Activated B cell treated with CpG ODN at 0.5 μM for 24 hours (primary cell): ENCODE measurements at regions of chr2 and their contacts with region 1.

Region 1: GRCh38 chr2:208072250-208072892 is 47.0 kb upstream of the PLEKHM3 start:
- DNase-seq: no peak
- ATAC-seq: peak; percentile 71
- H3K4me3 Mint-ChIP-seq: no peak overlapping the region
- H3K27ac Mint-ChIP-seq: no peak overlapping the region
- H3K4me1 Mint-ChIP-seq: no peaks in the 10 kb centered on the region
- H3K27me3 Mint-ChIP-seq: peaks cover 7% of the 10 kb centered on the region
- CTCF ChIP-seq: peak; percentile 63

Region 2: GRCh38 chr2:206981739-206982340 is 1090.5 kb before region 1 on chr2:
- CTCF ChIA-PET with region 1: no interaction called
- POLR2A ChIA-PET with region 1: no interaction called
- intact Hi-C with region 1: loop called (anchors 1 kb)
- DNase-seq: peak; percentile 18
- ATAC-seq: peak; percentile 54
- H3K4me3 Mint-ChIP-seq: no peak overlapping the region
- H3K27ac Mint-ChIP-seq: no peak overlapping the region
- H3K4me1 Mint-ChIP-seq: no peaks in the 10 kb centered on the region
- H3K27me3 Mint-ChIP-seq: peaks cover 3% of the 10 kb centered on the region
- CTCF ChIP-seq: no peak

Region 3: DNA sequence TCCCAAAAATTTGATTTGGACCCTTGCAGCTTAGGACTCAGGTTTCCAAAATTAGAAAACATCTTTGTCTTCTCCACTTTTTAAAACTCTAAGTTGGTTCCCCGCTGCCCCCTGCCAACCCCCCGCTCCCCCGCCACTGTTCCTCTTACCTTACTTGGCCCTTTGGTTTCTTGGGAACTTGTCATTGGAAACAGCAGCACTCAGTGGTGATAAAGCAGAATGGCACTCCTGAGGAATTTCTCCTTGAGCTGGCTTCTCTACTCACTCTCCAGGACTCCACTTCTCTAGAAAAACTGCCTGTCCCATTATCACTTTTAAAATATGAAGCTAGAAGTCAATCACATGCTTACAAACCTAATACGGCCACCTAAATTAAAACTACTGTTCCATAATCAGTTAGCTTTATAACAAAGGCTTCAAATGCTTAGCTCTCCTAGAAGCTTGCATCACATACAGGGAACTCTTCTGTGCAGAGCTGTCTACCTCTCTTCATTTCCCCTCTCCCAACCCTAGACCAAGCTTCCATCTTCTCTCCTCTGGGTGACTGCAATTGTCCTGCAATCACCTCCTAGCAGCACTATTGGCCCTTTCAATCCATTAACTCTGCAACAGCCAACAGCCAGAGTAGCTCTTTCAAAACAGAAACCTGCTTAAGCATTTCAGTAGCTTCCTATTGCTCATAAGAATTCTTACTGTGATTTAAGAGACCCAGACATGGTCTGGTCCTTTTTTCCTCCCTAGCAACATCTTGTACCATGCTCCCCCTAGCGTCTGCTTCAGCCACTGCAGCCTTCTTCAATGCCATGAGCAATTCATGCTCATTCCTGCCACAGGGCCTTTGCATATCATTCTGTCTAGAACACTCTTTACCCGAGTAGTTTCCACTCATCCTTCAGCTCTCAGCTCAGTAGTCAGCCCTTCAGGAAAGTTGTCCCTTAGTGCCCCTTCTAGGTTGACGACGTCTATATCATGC is 31.9 kb before region 1 on chr2:
- CTCF ChIA-PET with region 1: interaction called, 3 read pairs
- POLR2A ChIA-PET with region 1: no interaction called
- intact Hi-C with region 1: loop called (anchors 2 kb)
- DNase-seq: peak; percentile 41
- ATAC-seq: peak; percentile 91
- H3K4me3 Mint-ChIP-seq: no peak overlapping the region
- H3K27ac Mint-ChIP-seq: no peak overlapping the region
- H3K4me1 Mint-ChIP-seq: no peaks in the 10 kb centered on the region
- H3K27me3 Mint-ChIP-seq: peaks cover 2% of the 10 kb centered on the region
- CTCF ChIP-seq: peak; percentile 47

Region 4: GRCh38 chr2:208671284-208671683 is 598.9 kb after region 1 on chr2:
- CTCF ChIA-PET with region 1: no interaction called
- POLR2A ChIA-PET with region 1: no interaction called
- intact Hi-C with region 1: no loop called
- DNase-seq: no peak
- ATAC-seq: no peak
- H3K4me3 Mint-ChIP-seq: no peak overlapping the region
- H3K27ac Mint-ChIP-seq: no peak overlapping the region
- H3K4me1 Mint-ChIP-seq: no peaks in the 10 kb centered on the region
- H3K27me3 Mint-ChIP-seq: no peaks in the 10 kb centered on the region
- CTCF ChIP-seq: no peak